ENCODE measurements at regions of chr22 and their contacts with region 1.

Region 1: GRCh38 chr22:26339755-26340154 is 89.3 kb upstream of the ASPHD2 start:
- DNase-seq: no peak
- ATAC-seq: no peak
- H3K4me3 ChIP-seq: no peak overlapping the region
- H3K27ac ChIP-seq: no peak overlapping the region
- H3K4me1 ChIP-seq: no peaks in the 10 kb centered on the region
- H3K27me3 ChIP-seq: peaks cover 0 to 33% (median 15%) of the 10 kb centered on the region in 7 donors
- CTCF ChIP-seq: no peak

Region 2: GRCh38 chr22:25475257-25476022 is 864.3 kb before region 1 on chr22:
- intact Hi-C with region 1: loop called in 1 of 10 experiments (anchors 10 kb)
- DNase-seq: peak in 1 of 2 donors; percentile 53
- ATAC-seq: peak; percentile 40 to 77 (median 61)
- H3K4me3 ChIP-seq: peak overlapping the region in 1 of 10 donors; percentile 7
- H3K27ac ChIP-seq: peak overlapping the region in 1 of 10 donors; percentile 18
- H3K4me1 ChIP-seq: peaks cover 2 to 22% (median 9%) of the 10 kb centered on the region in 9 donors
- H3K27me3 ChIP-seq: no peaks in the 10 kb centered on the region
- CTCF ChIP-seq: no peak

Region 3: DNA sequence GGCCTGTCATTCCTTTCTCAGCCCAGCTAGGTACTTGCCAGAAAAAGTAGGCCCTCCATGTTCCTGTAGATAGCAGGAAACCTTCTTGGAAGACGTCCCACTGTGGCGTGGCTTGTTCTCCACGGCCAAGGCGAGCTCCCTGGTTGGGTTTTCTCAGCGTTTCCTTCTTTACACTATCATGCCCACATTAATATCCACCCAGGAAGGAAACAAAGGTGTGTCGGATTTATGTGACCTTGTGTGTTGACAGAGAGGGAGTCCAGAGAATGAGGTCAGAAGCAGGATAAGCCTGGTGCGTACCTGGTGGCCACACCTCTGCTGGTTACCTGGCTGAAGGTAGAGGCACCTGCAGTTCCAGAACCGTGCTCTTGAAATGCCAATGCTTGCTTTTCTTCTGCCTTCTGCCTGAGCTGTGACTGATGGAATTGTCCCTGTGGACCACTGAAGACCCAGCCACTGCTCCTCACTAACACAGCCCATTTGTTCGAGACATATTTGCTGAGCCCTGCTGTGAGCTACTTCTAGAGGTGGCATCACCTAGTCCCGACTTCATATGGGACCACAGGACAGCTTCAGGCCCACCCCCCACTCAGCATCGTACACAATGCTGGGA is 97.3 kb after region 1 on chr22:
- intact Hi-C with region 1: no loop called
- DNase-seq: no peak
- ATAC-seq: no peak
- H3K4me3 ChIP-seq: no peak overlapping the region
- H3K27ac ChIP-seq: no peak overlapping the region
- H3K4me1 ChIP-seq: peaks cover 0 to 21% (median 0%) of the 10 kb centered on the region in 9 donors
- H3K27me3 ChIP-seq: peaks cover 0 to 34% (median 5%) of the 10 kb centered on the region in 7 donors
- CTCF ChIP-seq: no peak

Measured in heart right ventricle (tissue), 16 donors.